Ovary (tissue), 10 donors: ENCODE measurements at regions of chr22 and their contacts with region 1.

Region 1: GRCh38 chr22:40583053-40583741 is 53.3 kb downstream of the MRTFA start:
- DNase-seq: no peak
- H3K4me3 ChIP-seq: no peak overlapping the region
- H3K27ac ChIP-seq: no peak overlapping the region
- H3K4me1 ChIP-seq: no peaks in the 10 kb centered on the region
- H3K27me3 ChIP-seq: no peaks in the 10 kb centered on the region
- CTCF ChIP-seq: no peak
- EP300 ChIP-seq: no peak
- POLR2A ChIP-seq: no peak

Region 2: GRCh38 chr22:40560551-40560950 is 22.6 kb before region 1 on chr22:
- intact Hi-C with region 1: no loop called
- DNase-seq: no peak
- H3K4me3 ChIP-seq: no peak overlapping the region
- H3K27ac ChIP-seq: no peak overlapping the region
- H3K4me1 ChIP-seq: peaks cover 1% of the 10 kb centered on the region
- H3K27me3 ChIP-seq: no peaks in the 10 kb centered on the region
- CTCF ChIP-seq: no peak
- EP300 ChIP-seq: no peak
- POLR2A ChIP-seq: no peak

Region 3: GRCh38 chr22:40628354-40629042 is 45.3 kb after region 1 on chr22:
- intact Hi-C with region 1: loop called in 1 of 4 experiments (anchors 2 kb)
- DNase-seq: no peak
- H3K4me3 ChIP-seq: no peak overlapping the region
- H3K27ac ChIP-seq: no peak overlapping the region
- H3K4me1 ChIP-seq: peaks cover 8% of the 10 kb centered on the region
- H3K27me3 ChIP-seq: no peaks in the 10 kb centered on the region
- CTCF ChIP-seq: no peak
- EP300 ChIP-seq: no peak
- POLR2A ChIP-seq: no peak